ENCODE measurements at regions of chr6 and their contacts with region 1.

Region 1: GRCh38 chr6:138115877-138116660 is 8.8 kb upstream of the PERP start:
- DNase-seq: peak in 1 of 2 donors; percentile 44
- H3K4me3 ChIP-seq: no peak overlapping the region
- H3K27ac ChIP-seq: no peak overlapping the region
- H3K4me1 ChIP-seq: no peaks in the 10 kb centered on the region
- H3K27me3 ChIP-seq: peaks cover 0 to 8% of the 10 kb centered on the region in 2 donors
- CTCF ChIP-seq: peak; percentile 57 to 72

Region 2: GRCh38 chr6:138403801-138404661 is 288.0 kb after region 1 on chr6 and contains the start of gene HEBP2:
- intact Hi-C with region 1: loop called (anchors 10 kb)
- DNase-seq: peak; percentile 94 to 95
- H3K4me3 ChIP-seq: peak within 1 kb of the TSS; percentile 75 to 86
- H3K27ac ChIP-seq: peak within 1 kb of the TSS; percentile 91 to 97
- H3K4me1 ChIP-seq: peaks cover 0 to 15% (median 9%) of the 10 kb centered on the region in 4 donors
- H3K27me3 ChIP-seq: no peaks in the 10 kb centered on the region
- CTCF ChIP-seq: peak; percentile 40 to 45

Region 3: DNA sequence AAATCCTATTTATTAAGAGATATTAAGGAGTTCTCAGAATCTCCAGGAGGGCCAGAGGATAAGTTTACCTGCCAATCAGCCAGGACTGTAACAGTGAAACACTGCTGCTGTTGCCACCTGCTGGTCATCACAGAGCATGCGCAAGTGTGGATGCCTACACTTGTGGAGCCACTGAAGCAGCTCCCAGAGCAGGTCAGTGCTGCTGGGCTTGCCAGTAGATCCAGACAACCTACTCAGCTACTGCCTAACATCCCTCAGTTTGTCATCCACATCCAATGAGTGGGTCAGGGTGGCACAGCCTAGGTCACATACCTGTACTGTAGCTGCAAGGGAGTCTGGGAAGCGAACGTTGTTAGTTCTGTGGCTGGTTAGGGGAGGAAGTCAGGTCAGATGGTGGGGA is 401.6 kb after region 1 on chr6:
- intact Hi-C with region 1: loop called (anchors 5 kb)
- DNase-seq: no peak
- H3K4me3 ChIP-seq: no peak overlapping the region
- H3K27ac ChIP-seq: no peak overlapping the region
- H3K4me1 ChIP-seq: no peaks in the 10 kb centered on the region
- H3K27me3 ChIP-seq: no peaks in the 10 kb centered on the region
- CTCF ChIP-seq: peak; percentile 39 to 52

Region 4: DNA sequence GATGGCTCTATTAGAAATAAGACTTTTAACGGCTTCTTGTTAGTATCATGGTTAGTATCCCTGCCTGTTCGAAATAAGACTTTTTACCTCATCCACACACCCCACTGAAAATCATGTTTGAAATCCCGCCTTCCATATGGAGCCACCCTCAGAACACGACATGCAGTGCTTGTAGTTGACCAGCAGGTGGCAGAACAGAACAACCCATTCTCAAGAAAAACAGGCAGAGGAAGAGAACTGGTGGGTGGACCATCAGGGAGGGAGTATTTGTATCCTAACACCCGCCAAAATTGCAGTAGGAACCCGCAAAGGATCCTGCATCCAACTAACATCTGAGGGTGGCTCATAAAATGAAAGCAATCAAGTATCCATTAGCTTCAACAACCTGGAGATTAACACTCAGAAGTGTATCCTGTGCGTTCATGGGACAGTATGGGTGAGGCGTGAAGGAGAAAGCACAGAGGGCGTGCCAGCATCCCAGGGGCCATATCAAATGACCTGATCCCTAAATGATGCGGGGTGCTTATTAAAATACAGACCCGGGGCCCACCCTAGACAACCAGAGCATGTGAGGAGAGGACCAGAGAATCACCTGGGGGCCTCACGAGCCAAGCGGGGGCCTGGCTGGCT is 472.9 kb after region 1 on chr6:
- intact Hi-C with region 1: loop called (anchors 10 kb)
- DNase-seq: peak; percentile 60 to 73
- H3K4me3 ChIP-seq: no peak overlapping the region
- H3K27ac ChIP-seq: no peak overlapping the region
- H3K4me1 ChIP-seq: peaks cover 0 to 4% (median 0%) of the 10 kb centered on the region in 4 donors
- H3K27me3 ChIP-seq: no peaks in the 10 kb centered on the region
- CTCF ChIP-seq: peak; percentile 84 to 86

Region 5: GRCh38 chr6:138765896-138766655 is 650.0 kb after region 1 on chr6:
- intact Hi-C with region 1: loop called (anchors 5 kb)
- DNase-seq: no peak
- H3K4me3 ChIP-seq: no peak overlapping the region
- H3K27ac ChIP-seq: no peak overlapping the region
- H3K4me1 ChIP-seq: no peaks in the 10 kb centered on the region
- H3K27me3 ChIP-seq: no peaks in the 10 kb centered on the region
- CTCF ChIP-seq: peak; percentile 45 to 62